Posterior vena cava (tissue), 2 donors: ENCODE measurements at regions of chr9 and their contacts with region 1.

Region 1: DNA sequence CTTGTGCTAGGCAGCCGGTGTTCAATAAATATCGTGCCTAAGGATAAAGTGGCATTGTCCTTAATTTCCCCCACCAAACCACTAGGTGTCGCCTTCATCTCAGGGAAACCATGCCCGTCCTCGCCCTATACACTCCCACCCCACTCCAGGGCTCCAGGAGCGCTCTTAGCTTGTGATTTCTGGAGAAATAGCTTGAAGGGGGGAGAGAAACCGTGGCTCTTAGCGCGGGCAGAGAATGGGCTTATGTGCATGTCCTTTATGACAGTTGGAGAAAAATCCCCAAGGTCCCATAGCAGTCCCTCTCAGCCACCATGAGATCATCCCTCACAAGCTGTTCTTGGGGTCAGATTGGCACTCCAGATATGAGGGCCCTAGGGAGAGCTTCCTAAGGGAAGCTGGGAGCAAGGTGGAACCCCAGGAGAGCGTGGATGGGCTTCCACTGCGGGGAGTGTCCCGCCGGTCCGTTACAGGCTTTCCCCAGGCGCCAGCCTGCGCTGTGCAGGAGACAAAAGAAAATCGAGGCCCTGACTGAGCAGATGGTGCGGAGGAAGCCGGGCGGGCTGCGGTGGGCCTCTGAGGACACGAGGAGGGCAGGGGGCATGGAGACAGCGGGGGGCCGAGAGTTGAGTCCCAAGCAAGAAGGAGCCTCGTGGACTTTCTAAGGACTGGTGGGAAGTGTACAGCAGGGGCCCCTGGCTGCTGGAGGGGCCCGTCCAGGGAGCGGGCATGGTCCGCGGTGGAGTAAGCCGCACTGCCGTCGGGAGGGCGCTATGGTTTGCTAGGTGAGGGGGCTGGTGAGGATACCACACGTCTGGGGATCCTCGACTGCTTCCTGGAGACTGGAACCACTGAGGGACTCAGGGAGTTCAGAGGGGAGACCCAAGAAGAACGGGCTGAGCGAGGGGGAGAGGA is 750 bp upstream of the NPR2 start:
- DNase-seq: peak; percentile 85

Region 2: DNA sequence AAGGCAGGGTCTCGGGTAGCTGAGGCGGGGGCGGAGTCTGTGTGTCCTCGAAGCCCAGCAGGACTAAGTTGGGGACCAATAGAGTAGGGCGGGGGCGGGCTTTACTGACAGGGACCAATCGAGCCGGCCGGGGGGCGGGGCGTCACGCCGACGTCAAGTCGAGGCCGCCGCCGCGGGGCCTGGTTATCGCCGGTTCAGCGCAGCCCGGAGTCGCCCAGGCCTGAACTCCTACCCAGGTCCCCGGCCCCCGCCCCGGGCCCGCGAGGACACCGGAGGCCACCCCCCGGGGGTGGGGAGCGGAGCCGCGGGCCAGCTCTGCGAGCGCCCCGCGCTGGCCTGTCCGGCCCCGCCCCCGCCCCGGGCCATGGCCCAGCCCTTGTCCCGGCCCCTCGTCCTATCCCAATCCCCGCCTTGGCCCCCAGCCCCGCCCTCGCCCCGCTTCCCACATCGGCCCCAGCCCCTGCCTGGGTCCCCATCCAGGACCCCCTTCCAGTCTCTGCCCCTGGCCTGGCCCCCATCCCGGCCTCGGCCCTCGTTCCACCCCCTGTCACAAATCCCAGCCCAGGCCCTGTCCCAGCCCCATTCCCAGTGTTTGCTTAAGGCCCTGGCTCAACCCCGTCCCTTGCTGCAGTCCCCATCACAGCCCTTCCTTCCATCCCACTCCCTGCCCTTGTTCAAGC is 38.6 kb after region 1 on chr9 and contains the start of gene TMEM8B:
- intact Hi-C with region 1: loop called (anchors 1 to 5 kb)
- DNase-seq: peak; percentile 98
- total RNA-seq, gene TMEM8B: 16.1 to 18.5 TPM

Region 3: DNA sequence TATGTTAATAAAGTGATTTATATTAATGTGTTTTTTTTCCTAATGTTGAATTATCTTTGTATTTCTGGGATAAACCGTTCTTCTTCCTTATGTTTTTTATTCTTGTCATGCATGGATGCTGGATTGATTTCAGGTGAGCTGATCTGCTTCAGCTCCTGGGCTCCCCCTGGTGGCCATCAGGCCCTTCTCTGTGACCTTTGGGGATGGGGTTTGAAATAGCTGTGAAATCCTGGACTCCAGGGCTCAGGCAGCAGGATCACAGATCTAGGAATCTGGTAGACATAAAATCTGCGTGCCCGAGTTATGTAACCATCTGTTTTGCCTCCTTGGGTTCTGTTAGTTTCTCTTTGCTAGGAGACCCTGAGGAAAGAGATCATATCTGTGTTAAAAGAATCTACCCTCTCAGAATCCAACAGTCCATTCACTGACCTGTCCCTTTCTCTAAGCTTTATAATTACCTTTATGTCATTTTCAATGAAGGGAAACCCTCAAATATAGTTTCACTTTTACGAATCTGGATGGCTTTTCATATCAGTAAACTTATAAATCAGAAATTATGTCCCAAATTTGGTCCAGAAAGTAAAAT is 91.7 kb after region 1 on chr9:
- intact Hi-C with region 1: loop called in 1 of 2 experiments (anchors 5 kb)
- DNase-seq: peak; percentile 94